GM12878 (cell line): ENCODE measurements at regions of chr14 and their contacts with region 1.

Region 1: DNA sequence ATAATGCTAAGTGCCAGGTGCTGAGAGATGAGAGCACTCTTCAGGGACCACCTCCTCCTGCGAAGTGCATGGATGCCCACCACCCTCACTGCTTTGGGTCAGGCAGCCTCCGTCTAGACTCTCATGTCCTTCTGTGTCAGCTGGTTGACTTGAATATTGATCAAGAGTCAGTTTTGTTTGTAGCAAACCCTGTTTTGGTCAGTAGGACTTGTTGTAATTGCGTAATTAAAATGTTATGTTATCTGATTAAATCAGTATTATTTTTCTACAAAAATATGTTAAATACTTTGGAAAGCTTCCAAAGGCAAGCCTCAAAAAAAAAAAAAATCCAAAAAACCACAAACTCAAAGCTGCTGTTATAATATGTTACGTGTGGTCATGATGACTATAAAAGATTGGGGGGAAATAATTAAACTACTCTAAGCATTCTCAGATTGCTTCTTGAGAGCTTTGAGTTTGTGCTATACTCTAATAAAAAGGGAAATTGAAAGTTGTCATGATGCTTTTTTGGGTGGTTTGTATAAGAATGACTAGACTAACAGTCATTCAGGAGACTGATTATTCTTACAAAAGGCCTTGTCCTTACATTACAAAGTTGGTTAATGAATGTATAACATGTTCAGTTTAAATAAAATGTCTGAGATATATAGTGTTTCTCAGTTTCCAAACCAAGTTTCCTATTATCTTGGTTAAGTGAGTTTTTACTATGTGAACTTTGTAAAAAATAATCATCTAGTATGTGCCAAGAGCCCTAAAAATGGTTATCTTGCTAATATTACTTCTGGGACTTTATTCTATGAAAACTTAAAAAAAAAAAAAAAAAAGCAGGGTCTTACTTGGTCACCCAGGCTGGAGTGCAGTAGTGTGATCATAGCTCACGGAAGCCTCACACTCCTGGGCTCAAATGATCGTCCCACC is 459.9 kb upstream of the RGS6 start:
- DNase-seq: no peak
- ATAC-seq: peak; percentile 84
- H3K4me3 ChIP-seq: no peak overlapping the region
- H3K27ac ChIP-seq: peak overlapping the region; percentile 69
- H3K4me1 ChIP-seq: peaks cover 35% of the 10 kb centered on the region
- H3K27me3 ChIP-seq: no peaks in the 10 kb centered on the region
- CTCF ChIP-seq: no peak
- EP300 ChIP-seq: 0 out of 4 replicates have a peak, but pooled peaks of 1 of the 2 experiments have one; percentile 1
- POLR2A ChIP-seq: no peak
- RAD21 ChIP-seq: no peak

Region 2: GRCh38 chr14:71328183-71328582 is 144.1 kb before region 1 on chr14:
- CTCF ChIA-PET with region 1: no interaction called
- POLR2A ChIA-PET with region 1: interaction called, 5 read pairs
- RAD21 ChIA-PET with region 1: interaction called, 10 read pairs
- SMC1A ChIA-PET with region 1: interaction called, 48 read pairs
- in situ Hi-C with region 1: no loop called
- intact Hi-C with region 1: loop called (anchors 2 kb)
- DNase-seq: peak; percentile 66
- ATAC-seq: peak; percentile 33
- H3K4me3 ChIP-seq: peak overlapping the region; percentile 18; the same call in 1 of the 2 replicates
- H3K27ac ChIP-seq: peak overlapping the region; percentile 58
- H3K4me1 ChIP-seq: peaks cover 60% of the 10 kb centered on the region
- H3K27me3 ChIP-seq: no peaks in the 10 kb centered on the region
- CTCF ChIP-seq: no peak
- EP300 ChIP-seq: peak; percentile 59 to 67; a peak in 1 of 4 replicates
- POLR2A ChIP-seq: no peak
- RAD21 ChIP-seq: no peak

Region 3: DNA sequence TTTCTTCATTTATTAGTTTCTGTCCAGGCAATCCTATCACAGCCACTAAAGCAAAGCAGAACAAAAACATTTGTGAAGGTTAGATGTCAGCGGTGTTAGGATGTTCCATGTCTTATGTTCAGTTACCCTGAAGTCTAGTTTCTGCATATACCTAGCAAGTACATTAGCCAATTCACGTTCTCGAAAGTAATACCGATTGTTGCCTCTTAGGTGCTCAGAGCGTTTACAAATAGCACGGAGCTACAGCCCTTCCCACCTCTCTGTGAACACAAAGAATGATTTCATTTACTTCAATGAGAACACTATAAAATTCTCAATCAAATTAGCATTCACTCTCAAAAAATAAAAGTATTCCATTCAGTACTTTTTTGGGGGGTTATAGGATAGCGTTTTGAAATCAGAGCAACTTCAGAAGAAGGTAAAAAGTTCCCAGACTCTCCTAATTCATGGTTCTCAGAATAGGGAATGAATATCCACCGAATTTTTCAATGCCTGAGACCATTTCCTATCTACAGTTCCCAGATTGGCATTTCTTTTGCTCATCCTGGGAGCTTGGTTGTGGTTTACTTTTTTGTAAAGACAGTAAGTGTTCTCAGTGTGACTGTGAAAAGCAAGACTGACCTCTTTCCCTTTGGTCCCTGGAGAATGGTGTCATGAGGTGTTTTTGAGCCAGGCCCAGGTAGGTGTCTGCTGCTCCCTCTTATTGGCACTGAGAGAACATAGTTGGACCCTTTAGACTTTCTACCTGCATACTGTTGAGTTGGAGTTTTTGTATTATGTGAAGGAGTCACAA is 28.1 kb before region 1 on chr14:
- CTCF ChIA-PET with region 1: interaction called, 4 read pairs
- POLR2A ChIA-PET with region 1: interaction called, 5 read pairs
- RAD21 ChIA-PET with region 1: interaction called, 6 read pairs
- SMC1A ChIA-PET with region 1: interaction called, 20 read pairs
- in situ Hi-C with region 1: no loop called
- intact Hi-C with region 1: no loop called
- DNase-seq: peak; percentile 40
- ATAC-seq: peak; percentile 69
- H3K4me3 ChIP-seq: no peak overlapping the region
- H3K27ac ChIP-seq: no peak overlapping the region
- H3K4me1 ChIP-seq: peaks cover under 1% of the 10 kb centered on the region; the same call in 1 of the 2 replicates
- H3K27me3 ChIP-seq: no peaks in the 10 kb centered on the region
- CTCF ChIP-seq: no peak
- EP300 ChIP-seq: peak; percentile 38 to 47; a peak in 2 of 4 replicates
- POLR2A ChIP-seq: no peak
- RAD21 ChIP-seq: no peak

Region 4: DNA sequence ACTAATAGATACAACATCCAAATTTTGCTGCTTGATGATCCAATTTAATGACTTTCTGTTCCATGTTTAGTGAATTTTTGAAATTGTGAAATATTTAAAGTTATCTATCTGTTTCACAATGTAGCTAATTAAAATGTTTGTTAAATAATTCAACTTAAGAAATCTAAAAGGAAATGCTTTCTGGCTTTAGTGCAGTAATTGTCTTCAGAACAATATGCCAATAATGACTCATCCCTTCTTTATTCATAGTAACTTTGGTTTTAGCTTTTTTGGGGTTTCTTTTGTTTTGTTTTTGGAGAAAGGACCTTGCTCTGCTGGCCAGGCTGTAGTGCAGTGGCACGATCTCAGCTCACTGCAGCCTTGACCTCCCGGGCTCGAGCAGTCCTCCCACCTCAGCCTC is 19.3 kb before region 1 on chr14:
- CTCF ChIA-PET with region 1: interaction called, 4 read pairs
- POLR2A ChIA-PET with region 1: interaction called, 6 read pairs
- RAD21 ChIA-PET with region 1: interaction called, 6 read pairs
- SMC1A ChIA-PET with region 1: interaction called, 12 read pairs
- in situ Hi-C with region 1: no loop called
- intact Hi-C with region 1: no loop called
- DNase-seq: no peak
- ATAC-seq: peak; percentile 36
- H3K4me3 ChIP-seq: no peak overlapping the region
- H3K27ac ChIP-seq: no peak overlapping the region
- H3K4me1 ChIP-seq: no peaks in the 10 kb centered on the region
- H3K27me3 ChIP-seq: no peaks in the 10 kb centered on the region
- CTCF ChIP-seq: no peak
- EP300 ChIP-seq: no peak
- POLR2A ChIP-seq: no peak
- RAD21 ChIP-seq: no peak

Region 5: GRCh38 chr14:71488703-71489191 is 16.4 kb after region 1 on chr14:
- CTCF ChIA-PET with region 1: interaction called, 5 read pairs
- POLR2A ChIA-PET with region 1: interaction called, 13 read pairs
- RAD21 ChIA-PET with region 1: interaction called, 10 read pairs
- SMC1A ChIA-PET with region 1: interaction called, 42 read pairs
- in situ Hi-C with region 1: no loop called
- intact Hi-C with region 1: no loop called
- DNase-seq: no peak
- ATAC-seq: no peak
- H3K4me3 ChIP-seq: no peak overlapping the region
- H3K27ac ChIP-seq: no peak overlapping the region
- H3K4me1 ChIP-seq: peaks cover 11% of the 10 kb centered on the region
- H3K27me3 ChIP-seq: no peaks in the 10 kb centered on the region
- CTCF ChIP-seq: no peak
- EP300 ChIP-seq: no peak
- POLR2A ChIP-seq: no peak
- RAD21 ChIP-seq: no peak

Region 6: GRCh38 chr14:71625891-71626701 is 153.8 kb after region 1 on chr14:
- CTCF ChIA-PET with region 1: no interaction called
- POLR2A ChIA-PET with region 1: no interaction called
- RAD21 ChIA-PET with region 1: no interaction called
- SMC1A ChIA-PET with region 1: no interaction called
- in situ Hi-C with region 1: no loop called
- intact Hi-C with region 1: no loop called
- DNase-seq: no peak
- ATAC-seq: no peak
- H3K4me3 ChIP-seq: no peak overlapping the region
- H3K27ac ChIP-seq: no peak overlapping the region
- H3K4me1 ChIP-seq: no peaks in the 10 kb centered on the region
- H3K27me3 ChIP-seq: no peaks in the 10 kb centered on the region
- CTCF ChIP-seq: no peak
- EP300 ChIP-seq: no peak
- POLR2A ChIP-seq: no peak
- RAD21 ChIP-seq: no peak

Region 7: DNA sequence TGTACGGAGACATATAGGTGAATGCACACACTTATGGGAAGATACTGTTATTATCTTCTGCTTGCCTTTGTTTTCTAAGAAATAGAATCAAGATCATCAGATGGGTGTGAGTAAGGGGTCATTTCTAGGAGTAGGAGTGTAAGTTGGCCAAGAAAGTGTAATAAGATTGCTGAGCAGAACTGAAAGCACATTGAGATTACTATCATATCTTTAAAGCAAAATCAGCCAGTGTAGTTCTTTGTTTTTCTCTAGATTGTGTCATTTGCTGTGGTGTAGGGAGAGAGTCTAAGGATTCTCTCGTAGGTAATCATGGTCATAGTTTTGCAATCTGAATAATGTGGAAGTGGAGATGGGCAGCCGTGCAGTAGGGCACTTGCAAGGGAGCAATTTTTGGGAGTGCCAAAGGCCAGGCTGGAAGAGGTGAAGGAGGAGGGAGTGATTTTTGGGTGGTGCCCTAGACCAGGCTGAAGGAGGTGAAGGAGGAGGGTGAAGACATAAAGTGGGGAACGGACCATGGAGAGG is 591.5 kb after region 1 on chr14:
- CTCF ChIA-PET with region 1: no interaction called
- POLR2A ChIA-PET with region 1: no interaction called
- RAD21 ChIA-PET with region 1: no interaction called
- SMC1A ChIA-PET with region 1: no interaction called
- in situ Hi-C with region 1: no loop called
- intact Hi-C with region 1: no loop called
- DNase-seq: no peak
- ATAC-seq: peak; percentile 65
- H3K4me3 ChIP-seq: no peak overlapping the region
- H3K27ac ChIP-seq: no peak overlapping the region
- H3K4me1 ChIP-seq: no peaks in the 10 kb centered on the region
- H3K27me3 ChIP-seq: no peaks in the 10 kb centered on the region
- CTCF ChIP-seq: no peak
- EP300 ChIP-seq: no peak
- POLR2A ChIP-seq: no peak
- RAD21 ChIP-seq: no peak